CD4-positive, alpha-beta T cell (primary cell): ENCODE measurements at regions of chrX and their contacts with region 1.

Region 1: GRCh38 chrX:130339408-130340222 is at the start of gene SLC25A14:
- DNase-seq: peak; percentile 48 to 87 (median 63)
- ATAC-seq: peak; percentile 94
- H3K4me3 ChIP-seq: peak within 1 kb of the TSS; percentile 74
- H3K4me3 Mint-ChIP-seq: peak within 1 kb of the TSS; percentile 96
- H3K27ac ChIP-seq: peak within 1 kb of the TSS in 1 of 2 donors; percentile 50
- H3K27ac Mint-ChIP-seq: peak within 1 kb of the TSS; percentile 80
- H3K4me1 ChIP-seq: peaks cover 11% of the 10 kb centered on the region
- H3K4me1 Mint-ChIP-seq: peaks cover 21% of the 10 kb centered on the region
- H3K27me3 ChIP-seq: no peaks in the 10 kb centered on the region
- H3K27me3 Mint-ChIP-seq: no peaks in the 10 kb centered on the region
- CTCF ChIP-seq: no peak
- total RNA-seq, gene SLC25A14: 12.2 to 13.0 TPM

Region 2: DNA sequence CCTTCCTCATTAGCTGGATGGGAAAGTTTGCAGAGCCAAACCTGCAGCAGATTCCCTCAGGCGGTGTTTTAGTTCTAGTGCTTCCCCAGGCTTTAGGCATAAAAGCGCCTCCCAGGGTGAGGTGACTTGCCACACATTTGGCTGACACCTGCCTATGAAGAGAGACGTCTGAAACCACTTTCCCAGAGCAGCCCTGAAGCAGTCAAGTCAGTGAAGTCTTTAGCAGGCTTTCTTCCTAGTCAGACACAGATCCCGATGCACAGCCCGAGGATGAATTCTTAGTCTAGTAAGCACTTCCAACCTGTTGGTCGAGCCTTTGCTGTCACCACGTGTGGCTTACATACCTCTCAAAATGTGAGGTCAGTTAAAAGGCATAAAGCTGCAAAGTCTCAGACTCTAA is 1300.4 kb before region 1 on chrX:
- CTCF ChIA-PET with region 1: no interaction called
- POLR2A ChIA-PET with region 1: no interaction called
- intact Hi-C with region 1: no loop called
- DNase-seq: no peak
- ATAC-seq: no peak
- H3K4me3 ChIP-seq: no peak overlapping the region
- H3K4me3 Mint-ChIP-seq: no peak overlapping the region
- H3K27ac ChIP-seq: no peak overlapping the region
- H3K27ac Mint-ChIP-seq: no peak overlapping the region
- H3K4me1 ChIP-seq: no peaks in the 10 kb centered on the region
- H3K4me1 Mint-ChIP-seq: no peaks in the 10 kb centered on the region
- H3K27me3 ChIP-seq: no peaks in the 10 kb centered on the region
- H3K27me3 Mint-ChIP-seq: no peaks in the 10 kb centered on the region
- CTCF ChIP-seq: no peak

Region 3: DNA sequence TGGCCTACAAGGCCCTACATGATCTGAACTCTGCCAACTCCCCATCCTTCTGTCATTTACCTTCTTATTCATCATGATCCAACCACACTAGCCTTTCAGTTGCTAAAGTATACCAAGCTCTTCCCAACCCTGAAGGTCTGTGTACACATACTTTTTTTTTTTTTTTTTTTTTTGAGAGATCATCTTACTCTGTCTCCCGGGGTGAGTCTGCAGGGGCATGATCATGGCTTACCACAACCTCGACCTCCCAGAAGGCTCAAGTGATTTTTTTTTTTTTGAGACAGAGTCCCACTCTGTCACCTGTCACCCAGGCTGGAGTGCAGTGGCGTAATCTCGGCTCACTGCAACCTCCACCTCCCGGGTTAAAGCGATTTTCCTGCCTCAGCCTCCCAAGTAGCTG is 439.6 kb before region 1 on chrX:
- CTCF ChIA-PET with region 1: no interaction called
- POLR2A ChIA-PET with region 1: no interaction called
- intact Hi-C with region 1: loop called in 1 of 2 experiments (anchors 5 kb)
- DNase-seq: no peak
- ATAC-seq: no peak
- H3K4me3 ChIP-seq: no peak overlapping the region
- H3K4me3 Mint-ChIP-seq: no peak overlapping the region
- H3K27ac ChIP-seq: no peak overlapping the region
- H3K27ac Mint-ChIP-seq: no peak overlapping the region
- H3K4me1 ChIP-seq: no peaks in the 10 kb centered on the region
- H3K4me1 Mint-ChIP-seq: no peaks in the 10 kb centered on the region
- H3K27me3 ChIP-seq: no peaks in the 10 kb centered on the region
- H3K27me3 Mint-ChIP-seq: no peaks in the 10 kb centered on the region
- CTCF ChIP-seq: no peak

Region 4: GRCh38 chrX:130268500-130269170 is 71.0 kb before region 1 on chrX and contains the start of gene ZNF280C:
- CTCF ChIA-PET with region 1: no interaction called
- POLR2A ChIA-PET with region 1: interaction called, 3 read pairs
- intact Hi-C with region 1: loop called (anchors 2 kb)
- DNase-seq: peak; percentile 78 to 95 (median 87)
- ATAC-seq: peak; percentile 96
- H3K4me3 ChIP-seq: peak within 1 kb of the TSS; percentile 77
- H3K4me3 Mint-ChIP-seq: peak within 1 kb of the TSS; percentile 91
- H3K27ac ChIP-seq: peak within 1 kb of the TSS; percentile 29 to 69
- H3K27ac Mint-ChIP-seq: peak within 1 kb of the TSS; percentile 84
- H3K4me1 ChIP-seq: peaks cover 4% of the 10 kb centered on the region
- H3K4me1 Mint-ChIP-seq: peaks cover 19% of the 10 kb centered on the region
- H3K27me3 ChIP-seq: no peaks in the 10 kb centered on the region
- H3K27me3 Mint-ChIP-seq: no peaks in the 10 kb centered on the region
- CTCF ChIP-seq: peak; percentile 31
- total RNA-seq, gene ZNF280C: 3.7 to 4.2 TPM

Region 5: DNA sequence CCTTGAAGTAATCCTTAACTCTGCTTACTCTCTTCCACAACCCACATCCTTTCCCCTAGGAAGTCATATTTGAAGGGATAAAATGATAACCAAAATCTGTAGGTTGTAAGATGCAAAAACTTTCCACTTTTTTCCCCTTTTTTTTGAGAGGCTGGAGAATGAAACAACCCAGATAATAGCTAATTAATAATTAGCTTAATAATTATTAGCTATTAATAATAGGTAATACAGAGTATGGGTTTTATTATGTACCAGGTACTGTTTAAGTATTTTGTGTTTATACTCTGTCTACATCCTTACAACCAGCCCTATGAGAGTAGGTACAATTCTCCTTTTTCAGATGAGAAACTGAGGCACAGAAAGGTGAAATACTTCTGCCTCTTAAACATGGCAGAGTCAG is 36.5 kb after region 1 on chrX:
- CTCF ChIA-PET with region 1: no interaction called
- POLR2A ChIA-PET with region 1: no interaction called
- intact Hi-C with region 1: no loop called
- DNase-seq: no peak
- ATAC-seq: no peak
- H3K4me3 ChIP-seq: no peak overlapping the region
- H3K4me3 Mint-ChIP-seq: no peak overlapping the region
- H3K27ac ChIP-seq: no peak overlapping the region
- H3K27ac Mint-ChIP-seq: no peak overlapping the region
- H3K4me1 ChIP-seq: no peaks in the 10 kb centered on the region
- H3K4me1 Mint-ChIP-seq: no peaks in the 10 kb centered on the region
- H3K27me3 ChIP-seq: no peaks in the 10 kb centered on the region
- H3K27me3 Mint-ChIP-seq: no peaks in the 10 kb centered on the region
- CTCF ChIP-seq: no peak

Region 6: DNA sequence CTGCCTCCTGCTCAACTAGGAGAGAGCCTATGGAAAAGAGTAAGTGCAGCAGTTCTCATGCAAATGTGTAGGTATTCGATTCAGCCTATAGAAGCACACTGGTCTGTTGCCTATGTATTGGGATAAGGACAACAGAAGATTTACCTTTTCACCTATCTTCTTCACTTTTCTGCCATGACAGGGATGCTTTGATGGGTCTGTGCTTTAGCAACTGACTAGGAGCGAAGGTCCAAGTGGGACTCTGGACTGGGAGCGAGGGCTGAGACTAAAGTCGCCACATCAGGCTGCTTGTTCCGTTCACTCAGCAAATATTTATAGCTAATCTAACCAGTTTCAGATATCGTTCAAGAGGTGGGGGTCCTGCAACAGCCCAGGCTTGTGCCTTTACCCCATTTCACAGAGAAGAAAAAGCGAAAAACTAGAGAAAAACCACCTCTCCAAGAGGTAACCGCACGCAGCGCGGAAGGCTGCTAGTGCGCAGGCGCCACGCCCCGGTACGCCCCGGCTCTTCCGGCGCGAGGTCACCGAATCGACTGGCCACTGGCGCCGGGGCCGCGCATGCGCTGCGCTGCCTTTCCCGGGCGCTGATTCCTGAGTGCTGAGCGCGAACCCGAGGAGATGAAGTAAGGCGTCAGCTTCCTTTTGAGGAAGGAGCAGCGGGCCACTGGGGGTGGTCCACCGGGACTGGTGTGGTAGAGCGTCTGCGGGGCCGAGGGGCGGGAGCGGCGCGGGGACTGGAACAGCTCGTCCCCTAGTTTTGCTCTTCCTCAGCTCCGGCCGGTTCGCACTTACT is 62.0 kb after region 1 on chrX and contains the start of gene RBMX2:
- CTCF ChIA-PET with region 1: no interaction called
- POLR2A ChIA-PET with region 1: no interaction called
- intact Hi-C with region 1: loop called in 1 of 2 experiments (anchors 2 kb)
- DNase-seq: peak; percentile 38 to 90 (median 62)
- ATAC-seq: peak; percentile 89
- H3K4me3 ChIP-seq: peak within 1 kb of the TSS; percentile 84
- H3K4me3 Mint-ChIP-seq: peak within 1 kb of the TSS; percentile 93
- H3K27ac ChIP-seq: peak within 1 kb of the TSS; percentile 73 to 74
- H3K27ac Mint-ChIP-seq: peak within 1 kb of the TSS; percentile 88
- H3K4me1 ChIP-seq: peaks cover 14% of the 10 kb centered on the region
- H3K4me1 Mint-ChIP-seq: peaks cover 28% of the 10 kb centered on the region
- H3K27me3 ChIP-seq: no peaks in the 10 kb centered on the region
- H3K27me3 Mint-ChIP-seq: peaks cover 8% of the 10 kb centered on the region
- CTCF ChIP-seq: no peak
- total RNA-seq, gene RBMX2: 20.5 to 21.5 TPM

Region 7: DNA sequence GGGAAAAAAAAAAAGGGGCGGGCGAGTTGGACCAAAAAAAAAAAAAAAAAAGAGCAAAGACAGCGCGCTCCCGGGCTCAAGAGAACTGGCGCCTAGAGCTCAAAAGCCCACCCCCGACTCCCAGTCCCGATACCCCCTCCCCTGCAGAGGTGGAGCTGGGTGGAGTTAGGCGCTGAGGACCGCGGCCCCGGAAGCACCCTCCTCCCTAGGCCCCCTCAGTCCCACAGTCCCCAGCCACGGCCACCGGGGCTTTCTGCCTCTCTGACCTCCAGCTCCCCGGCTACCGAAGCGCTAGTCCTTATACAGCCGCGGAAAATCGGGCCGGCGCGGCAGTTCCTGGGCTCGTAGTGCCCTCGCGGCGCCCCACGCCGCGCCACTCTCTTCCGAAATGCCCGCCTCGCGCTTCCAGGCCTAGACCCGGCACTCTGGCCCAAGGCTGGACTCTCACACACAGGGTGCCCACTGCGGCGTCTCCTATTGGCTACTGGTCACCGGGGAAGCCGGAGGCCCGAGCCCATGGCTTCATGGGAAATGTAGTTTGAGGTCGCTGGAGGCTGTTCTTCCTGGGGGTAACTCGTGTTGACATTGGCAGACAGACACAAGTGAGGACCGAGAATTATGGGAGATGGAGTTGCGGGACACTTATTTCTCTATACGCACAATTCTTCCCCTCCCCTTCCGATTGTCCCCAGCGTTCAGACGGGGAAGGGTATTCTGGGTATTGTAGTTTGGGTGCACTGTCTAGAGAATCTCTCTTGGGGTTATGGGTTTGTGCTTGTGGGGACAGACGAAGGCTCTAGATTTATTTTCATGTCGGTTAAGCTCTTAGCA is 563.4 kb after region 1 on chrX and contains the start of gene ENOX2:
- CTCF ChIA-PET with region 1: no interaction called
- POLR2A ChIA-PET with region 1: interaction called, 3 read pairs
- intact Hi-C with region 1: loop called in 1 of 2 experiments (anchors 2 kb)
- DNase-seq: peak; percentile 59 to 93 (median 71)
- ATAC-seq: peak; percentile 95
- H3K4me3 ChIP-seq: peak within 1 kb of the TSS; percentile 93
- H3K4me3 Mint-ChIP-seq: no peak within 1 kb of the TSS
- H3K27ac ChIP-seq: peak within 1 kb of the TSS; percentile 74 to 82
- H3K27ac Mint-ChIP-seq: peak within 1 kb of the TSS; percentile 76
- H3K4me1 ChIP-seq: peaks cover 8% of the 10 kb centered on the region
- H3K4me1 Mint-ChIP-seq: peaks cover 14% of the 10 kb centered on the region
- H3K27me3 ChIP-seq: no peaks in the 10 kb centered on the region
- H3K27me3 Mint-ChIP-seq: no peaks in the 10 kb centered on the region
- CTCF ChIP-seq: no peak
- total RNA-seq, gene ENOX2: 4.0 to 6.5 TPM